Posterior vena cava (tissue), 2 donors: ENCODE measurements at regions of chr12 and their contacts with region 1.

Region 1: DNA sequence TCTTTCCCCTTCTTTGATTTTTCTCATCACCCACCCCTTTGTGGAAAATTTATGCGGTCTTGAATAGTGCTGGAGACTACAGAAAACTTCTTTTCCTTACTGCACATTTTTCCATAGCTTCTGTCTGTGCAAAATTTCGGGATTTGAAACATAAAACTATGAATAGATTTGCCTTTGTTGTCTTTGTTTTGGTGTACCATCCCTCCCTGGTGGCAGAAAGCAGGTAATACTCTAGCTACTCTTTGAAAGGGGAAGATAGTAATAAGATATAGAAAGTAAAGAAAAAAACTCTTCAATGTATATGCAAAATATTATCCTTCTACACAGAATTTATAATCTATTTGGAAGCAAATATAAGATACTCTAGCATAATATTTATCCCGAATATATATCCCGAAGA is 79.1 kb upstream of the LMO3 start:
- DNase-seq: no peak

Region 2: GRCh38 chr12:16385782-16386646 is 299.1 kb before region 1 on chr12:
- intact Hi-C with region 1: loop called in 1 of 2 experiments (anchors 10 kb)
- DNase-seq: no peak

Region 3: GRCh38 chr12:17411662-17412061 is 726.6 kb after region 1 on chr12:
- intact Hi-C with region 1: no loop called
- DNase-seq: no peak